ENCODE measurements at regions of chr1 and their contacts with region 1.

Region 1: GRCh38 chr1:220776720-220777326 is 9.9 kb upstream of the MTARC1 start:
- DNase-seq: peak; percentile 49
- ATAC-seq: peak; percentile 100
- H3K4me3 ChIP-seq: no peak overlapping the region
- H3K27ac ChIP-seq: no peak overlapping the region
- H3K4me1 ChIP-seq: no peaks in the 10 kb centered on the region
- H3K27me3 ChIP-seq: no peaks in the 10 kb centered on the region
- CTCF ChIP-seq: peak; percentile 98
- EP300 ChIP-seq: no peak
- POLR2A ChIP-seq: no peak
- RAD21 ChIP-seq: peak; percentile 96

Region 2: GRCh38 chr1:220217383-220217988 is 559.3 kb before region 1 on chr1:
- CTCF ChIA-PET with region 1: no interaction called
- POLR2A ChIA-PET with region 1: no interaction called
- in situ Hi-C with region 1: no loop called
- intact Hi-C with region 1: loop called (anchors 10 kb)
- DNase-seq: peak; percentile 25
- ATAC-seq: peak; percentile 74
- H3K4me3 ChIP-seq: no peak overlapping the region
- H3K27ac ChIP-seq: no peak overlapping the region
- H3K4me1 ChIP-seq: no peaks in the 10 kb centered on the region
- H3K27me3 ChIP-seq: no peaks in the 10 kb centered on the region; a peak in 1 of 5 replicates
- CTCF ChIP-seq: peak; percentile 46
- EP300 ChIP-seq: no peak
- POLR2A ChIP-seq: no peak
- RAD21 ChIP-seq: no peak

Region 3: GRCh38 chr1:220296981-220297380 is 479.8 kb before region 1 on chr1:
- CTCF ChIA-PET with region 1: interaction called, 4 read pairs
- POLR2A ChIA-PET with region 1: no interaction called
- in situ Hi-C with region 1: no loop called
- intact Hi-C with region 1: loop called (anchors 1 kb)
- DNase-seq: no peak
- ATAC-seq: no peak
- H3K4me3 ChIP-seq: no peak overlapping the region
- H3K27ac ChIP-seq: no peak overlapping the region
- H3K4me1 ChIP-seq: no peaks in the 10 kb centered on the region
- H3K27me3 ChIP-seq: peaks cover 0 to 8% of the 10 kb centered on the region in 2 experiments; a peak in 1 of 5 replicates
- CTCF ChIP-seq: no peak
- EP300 ChIP-seq: no peak
- POLR2A ChIP-seq: no peak
- RAD21 ChIP-seq: no peak

Region 4: GRCh38 chr1:220544901-220545303 is 231.9 kb before region 1 on chr1:
- CTCF ChIA-PET with region 1: no interaction called
- POLR2A ChIA-PET with region 1: no interaction called
- in situ Hi-C with region 1: loop called (anchors 25 kb)
- intact Hi-C with region 1: loop called (anchors 10 kb)
- DNase-seq: peak; percentile 13
- ATAC-seq: peak; percentile 88
- H3K4me3 ChIP-seq: no peak overlapping the region
- H3K27ac ChIP-seq: no peak overlapping the region
- H3K4me1 ChIP-seq: no peaks in the 10 kb centered on the region
- H3K27me3 ChIP-seq: no peaks in the 10 kb centered on the region
- CTCF ChIP-seq: peak; percentile 36; the same call in 1 of the 2 replicates
- EP300 ChIP-seq: no peak
- POLR2A ChIP-seq: no peak
- RAD21 ChIP-seq: no peak

Region 5: DNA sequence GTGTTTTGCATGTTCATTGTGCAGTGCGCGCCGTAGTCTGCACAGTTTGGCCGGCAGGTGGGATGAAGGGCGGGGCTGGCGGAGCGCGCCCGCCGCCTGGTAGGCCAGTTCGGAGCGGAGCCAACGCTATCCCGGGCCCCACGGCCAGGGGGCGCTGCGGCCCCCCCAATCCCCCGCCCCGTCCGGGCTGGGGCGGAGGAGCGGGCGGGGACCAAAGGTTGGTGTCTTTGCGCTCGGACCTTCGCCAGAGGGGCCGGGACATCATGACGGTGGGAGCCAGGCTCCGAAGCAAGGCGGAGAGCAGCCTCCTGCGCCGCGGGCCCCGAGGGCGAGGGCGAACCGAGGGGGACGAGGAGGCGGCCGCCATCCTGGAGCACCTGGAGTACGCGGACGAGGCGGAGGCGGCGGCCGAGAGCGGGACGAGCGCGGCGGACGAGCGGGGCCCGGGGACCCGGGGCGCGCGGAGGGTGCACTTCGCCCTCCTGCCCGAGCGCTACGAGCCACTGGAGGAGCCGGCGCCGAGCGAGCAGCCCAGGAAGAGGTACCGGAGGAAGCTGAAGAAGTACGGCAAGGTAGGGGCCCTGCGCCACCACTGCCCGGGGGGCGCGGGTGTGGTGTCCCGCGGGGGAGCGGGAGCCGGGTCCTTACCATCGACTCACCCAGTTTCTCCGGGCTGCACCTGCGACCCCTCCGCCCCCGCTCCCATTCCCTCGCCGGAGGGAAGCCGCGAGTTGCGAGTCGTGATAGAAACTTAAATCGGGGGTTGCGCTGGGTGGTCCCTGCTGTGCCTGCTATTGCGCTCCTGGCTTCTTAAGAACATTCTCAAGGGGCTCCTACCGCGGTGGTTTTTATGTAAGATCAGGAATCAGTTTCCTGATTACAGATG is 86.4 kb before region 1 on chr1 and contains the start of gene C1orf115:
- CTCF ChIA-PET with region 1: interaction called, 34 read pairs
- POLR2A ChIA-PET with region 1: no interaction called
- in situ Hi-C with region 1: loop called (anchors 5 kb)
- intact Hi-C with region 1: loop called (anchors 1 kb)
- DNase-seq: peak; percentile 68
- ATAC-seq: peak; percentile 85
- H3K4me3 ChIP-seq: peak within 1 kb of the TSS; percentile 81 to 86 (median 82)
- H3K27ac ChIP-seq: peak within 1 kb of the TSS; percentile 61
- H3K4me1 ChIP-seq: peaks cover 45% of the 10 kb centered on the region
- H3K27me3 ChIP-seq: no peaks in the 10 kb centered on the region; a peak in 2 of 5 replicates
- CTCF ChIP-seq: peak; percentile 94
- EP300 ChIP-seq: no peak; a peak in 1 of 4 replicates
- POLR2A ChIP-seq: peak; percentile 63 to 87
- RAD21 ChIP-seq: peak; percentile 96
- total RNA-seq, gene C1orf115: 85.9 and 86.7 TPM in 2 replicates

Region 6: GRCh38 chr1:220711056-220711809 is 65.6 kb before region 1 on chr1:
- CTCF ChIA-PET with region 1: no interaction called
- POLR2A ChIA-PET with region 1: no interaction called
- in situ Hi-C with region 1: no loop called
- intact Hi-C with region 1: no loop called
- DNase-seq: peak; percentile 28
- ATAC-seq: peak; percentile 43
- H3K4me3 ChIP-seq: no peak overlapping the region
- H3K27ac ChIP-seq: peak overlapping the region; percentile 44
- H3K4me1 ChIP-seq: peaks cover 62% of the 10 kb centered on the region
- H3K27me3 ChIP-seq: no peaks in the 10 kb centered on the region
- CTCF ChIP-seq: no peak
- EP300 ChIP-seq: 0 out of 4 replicates have a peak, but pooled peaks of 1 of the 2 experiments have one; percentile 43
- POLR2A ChIP-seq: no peak
- RAD21 ChIP-seq: no peak

Region 7: GRCh38 chr1:220852408-220852807 is 75.6 kb after region 1 on chr1:
- CTCF ChIA-PET with region 1: no interaction called
- POLR2A ChIA-PET with region 1: no interaction called
- in situ Hi-C with region 1: no loop called
- intact Hi-C with region 1: no loop called
- DNase-seq: no peak
- ATAC-seq: no peak
- H3K4me3 ChIP-seq: no peak overlapping the region
- H3K27ac ChIP-seq: no peak overlapping the region
- H3K4me1 ChIP-seq: no peaks in the 10 kb centered on the region
- H3K27me3 ChIP-seq: no peaks in the 10 kb centered on the region
- CTCF ChIP-seq: no peak
- EP300 ChIP-seq: no peak
- POLR2A ChIP-seq: no peak
- RAD21 ChIP-seq: no peak